ENCODE measurements at regions of chr17 and their contacts with region 1.

Region 1: GRCh38 chr17:32877164-32877764 is 340 bp upstream of the MYO1D start:
- DNase-seq: no peak
- H3K4me3 ChIP-seq: peak overlapping the region; percentile 82
- H3K27me3 ChIP-seq: no peaks in the 10 kb centered on the region; the same call in 1 of the 2 replicates
- CTCF ChIP-seq: peak; percentile 78

Region 2: GRCh38 chr17:32486111-32486700 is 391.1 kb before region 1 on chr17:
- CTCF ChIA-PET with region 1: interaction called, 12 read pairs
- POLR2A ChIA-PET with region 1: no interaction called
- DNase-seq: no peak
- H3K4me3 ChIP-seq: peak overlapping the region; percentile 51
- H3K27me3 ChIP-seq: no peaks in the 10 kb centered on the region
- CTCF ChIP-seq: no peak

Region 3: GRCh38 chr17:32783602-32784001 is 93.7 kb before region 1 on chr17:
- CTCF ChIA-PET with region 1: interaction called, 133 read pairs
- POLR2A ChIA-PET with region 1: interaction called, 3 read pairs
- DNase-seq: no peak
- H3K4me3 ChIP-seq: no peak overlapping the region
- H3K27me3 ChIP-seq: no peaks in the 10 kb centered on the region
- CTCF ChIP-seq: peak; percentile 54

Region 4: GRCh38 chr17:32803544-32803943 is 73.7 kb before region 1 on chr17:
- CTCF ChIA-PET with region 1: interaction called, 26 read pairs
- POLR2A ChIA-PET with region 1: no interaction called
- DNase-seq: no peak
- H3K4me3 ChIP-seq: no peak overlapping the region
- H3K27me3 ChIP-seq: no peaks in the 10 kb centered on the region
- CTCF ChIP-seq: no peak

Region 5: DNA sequence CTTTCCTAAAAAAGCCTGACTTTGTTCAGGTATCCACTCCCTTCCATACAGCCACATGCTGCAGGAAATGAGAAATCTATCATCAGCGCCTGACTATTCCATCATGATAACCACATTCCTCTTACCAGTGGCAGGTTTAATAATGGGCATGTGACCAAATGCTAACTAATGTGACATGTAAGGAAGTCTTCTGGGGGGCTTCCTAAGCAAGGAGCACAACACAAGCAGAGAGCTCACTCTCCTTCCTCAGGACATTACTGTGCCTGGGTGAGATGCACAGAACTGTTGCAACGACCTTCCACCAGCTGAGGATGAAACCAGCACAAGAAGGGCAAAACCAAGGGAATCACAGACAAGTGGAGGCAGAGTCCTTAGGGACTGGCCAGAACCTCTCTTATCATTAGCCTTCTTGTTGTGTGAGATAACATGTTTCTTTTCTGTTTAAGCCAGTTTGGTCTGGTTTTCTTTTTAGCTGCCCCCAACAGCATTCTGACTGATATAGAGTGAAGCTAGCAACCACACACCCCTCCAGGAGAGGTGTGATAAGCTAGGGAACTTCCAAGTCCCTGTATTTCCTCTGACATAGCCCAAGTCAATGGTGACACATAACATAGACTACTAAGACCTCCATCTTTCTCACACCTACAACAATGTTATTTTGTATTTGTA is 17.3 kb before region 1 on chr17:
- CTCF ChIA-PET with region 1: interaction called, 29 read pairs
- POLR2A ChIA-PET with region 1: no interaction called
- DNase-seq: no peak
- H3K4me3 ChIP-seq: no peak overlapping the region
- H3K27me3 ChIP-seq: no peaks in the 10 kb centered on the region
- CTCF ChIP-seq: no peak

Region 6: DNA sequence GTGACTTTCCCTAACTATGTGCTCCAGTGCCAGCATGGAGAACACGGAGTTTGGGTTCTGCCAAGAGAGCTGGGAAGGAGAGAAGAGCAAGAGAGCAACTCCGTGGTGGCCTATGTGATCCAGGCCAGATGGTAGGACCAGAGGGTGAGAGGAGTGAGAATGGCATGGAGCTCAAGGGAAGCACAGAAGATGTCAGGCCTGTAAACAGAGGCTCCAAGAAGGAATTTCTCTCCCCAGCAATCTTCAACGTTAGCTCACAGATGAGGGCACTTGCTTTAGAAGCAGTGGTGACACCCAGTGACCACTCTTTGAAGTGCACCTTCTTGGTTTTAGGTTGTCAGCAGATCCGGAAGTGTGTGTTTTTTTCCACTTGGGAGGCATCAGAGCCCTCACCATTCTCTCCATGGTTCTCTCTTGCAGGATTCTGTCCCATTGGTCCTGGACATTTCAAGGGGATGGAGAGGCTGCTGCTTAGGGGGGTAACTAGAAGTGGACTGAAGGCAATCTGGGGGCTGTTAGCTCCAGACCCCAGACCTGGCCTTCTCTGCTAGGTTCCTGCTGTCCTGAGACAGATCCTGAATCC is 32.6 kb after region 1 on chr17:
- CTCF ChIA-PET with region 1: interaction called, 62 read pairs
- POLR2A ChIA-PET with region 1: no interaction called
- DNase-seq: peak; percentile 44
- H3K4me3 ChIP-seq: no peak overlapping the region
- H3K27me3 ChIP-seq: no peaks in the 10 kb centered on the region
- CTCF ChIP-seq: peak; percentile 80

Region 7: DNA sequence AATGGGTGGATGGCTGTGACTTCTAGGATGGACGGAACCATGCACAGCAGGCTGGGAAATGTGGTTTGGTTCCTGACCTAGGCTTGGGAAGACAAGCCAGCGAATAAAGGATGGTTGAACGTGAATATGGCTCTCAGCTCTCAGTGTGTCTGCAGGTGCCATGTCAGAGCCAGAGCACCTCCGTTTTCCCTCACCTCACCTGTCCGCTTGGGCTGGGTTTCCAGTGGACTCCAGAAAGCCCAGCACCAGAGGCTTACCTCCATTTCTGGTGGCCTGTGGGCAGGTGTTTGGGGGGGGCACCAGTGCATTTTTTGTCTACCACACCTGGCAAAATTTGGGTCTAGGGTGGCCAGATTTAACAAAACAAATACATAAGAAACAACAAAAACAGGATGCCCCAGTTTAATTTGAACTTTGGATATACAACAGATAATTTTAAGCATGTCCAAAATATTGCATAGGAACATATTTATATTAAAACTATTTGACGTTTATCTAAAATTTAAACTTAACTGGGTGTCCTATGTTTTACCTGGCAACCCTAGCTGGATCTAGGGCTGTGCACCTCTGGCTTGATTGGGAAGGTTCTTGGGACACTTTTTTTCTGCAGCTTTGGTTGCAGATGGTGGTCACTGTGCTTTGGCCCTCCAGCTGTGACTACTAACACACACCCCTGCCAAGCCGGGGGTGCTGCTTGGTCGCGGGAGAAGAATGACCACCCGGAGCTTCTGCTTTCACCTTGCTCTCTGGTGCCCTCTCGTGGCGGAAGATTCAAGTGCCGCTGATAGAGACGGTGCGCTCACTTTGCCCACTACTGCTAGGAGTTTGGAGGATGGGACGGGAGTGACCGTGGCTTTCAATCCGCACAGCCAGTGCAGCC is 120.7 kb after region 1 on chr17:
- CTCF ChIA-PET with region 1: interaction called, 10 read pairs
- POLR2A ChIA-PET with region 1: no interaction called
- DNase-seq: peak; percentile 23
- H3K4me3 ChIP-seq: no peak overlapping the region; the same call in 1 of the 2 replicates
- H3K27me3 ChIP-seq: peaks cover 10% of the 10 kb centered on the region
- CTCF ChIP-seq: peak; percentile 95

Measured in BJ (cell line).